WTC11 (cell line): ENCODE measurements at regions of chr12 and their contacts with region 1.

Region 1: GRCh38 chr12:68807576-68808387 is at the start of gene MDM2:
- DNase-seq: peak; percentile 94
- ATAC-seq: peak; percentile 83
- H3K4me3 Mint-ChIP-seq: peak within 1 kb of the TSS; percentile 86
- H3K27ac Mint-ChIP-seq: peak within 1 kb of the TSS; percentile 98
- H3K4me1 Mint-ChIP-seq: peaks cover 42% of the 10 kb centered on the region
- H3K27me3 Mint-ChIP-seq: no peaks in the 10 kb centered on the region
- CTCF ChIP-seq: peak; percentile 59
- total RNA-seq, gene MDM2: 130 to 207 TPM (median 137 TPM) in 3 replicates

Region 2: DNA sequence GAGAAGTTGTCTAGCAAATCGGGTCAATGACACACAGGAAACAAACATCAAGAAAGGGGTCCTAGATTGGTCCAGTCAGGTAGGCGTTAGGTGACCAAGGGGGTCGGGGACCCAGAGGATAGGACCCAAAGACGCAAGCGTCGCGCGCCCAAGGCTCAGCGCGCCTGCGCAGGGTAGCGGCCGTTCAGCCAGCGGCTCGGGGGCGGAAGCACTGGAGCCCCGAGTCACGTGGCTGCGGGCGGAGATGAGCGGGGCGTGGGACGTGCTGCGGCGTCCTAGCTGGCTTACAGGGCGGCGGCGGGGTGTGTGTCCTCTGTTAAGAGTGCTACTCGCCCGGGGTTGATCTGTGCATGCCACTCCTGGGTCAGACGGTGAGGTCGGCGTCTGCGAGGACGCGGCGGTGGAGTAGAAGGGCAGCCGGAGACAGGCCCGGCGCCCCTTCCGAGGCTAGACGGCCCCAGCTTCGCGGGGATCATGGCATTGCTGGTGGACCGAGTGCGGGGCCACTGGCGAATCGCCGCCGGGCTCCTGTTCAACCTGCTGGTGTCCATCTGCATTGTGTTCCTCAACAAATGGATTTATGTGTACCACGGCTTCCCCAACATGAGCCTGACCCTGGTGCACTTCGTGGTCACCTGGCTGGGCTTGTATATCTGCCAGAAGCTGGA is 61.7 kb before region 1 on chr12 and contains the start of gene SLC35E3:
- CTCF ChIA-PET with region 1: interaction called, 18 read pairs
- POLR2A ChIA-PET with region 1: interaction called, 13 read pairs
- DNase-seq: peak; percentile 86
- ATAC-seq: peak; percentile 97
- H3K4me3 Mint-ChIP-seq: peak within 1 kb of the TSS; percentile 98
- H3K27ac Mint-ChIP-seq: peak within 1 kb of the TSS; percentile 94
- H3K4me1 Mint-ChIP-seq: peaks cover 17% of the 10 kb centered on the region
- H3K27me3 Mint-ChIP-seq: no peaks in the 10 kb centered on the region
- CTCF ChIP-seq: no peak
- total RNA-seq, gene SLC35E3: 11.1 to 11.3 TPM (median 11.1 TPM) in 3 replicates

Region 3: GRCh38 chr12:68831272-68831671 is 23.5 kb after region 1 on chr12:
- CTCF ChIA-PET with region 1: interaction called, 23 read pairs
- POLR2A ChIA-PET with region 1: interaction called, 4 read pairs
- DNase-seq: no peak
- ATAC-seq: peak; percentile 76
- H3K4me3 Mint-ChIP-seq: no peak overlapping the region
- H3K27ac Mint-ChIP-seq: peak overlapping the region; percentile 85
- H3K4me1 Mint-ChIP-seq: peaks cover 24% of the 10 kb centered on the region
- H3K27me3 Mint-ChIP-seq: no peaks in the 10 kb centered on the region
- CTCF ChIP-seq: no peak

Region 4: GRCh38 chr12:68889647-68890121 is 81.9 kb after region 1 on chr12:
- CTCF ChIA-PET with region 1: no interaction called
- POLR2A ChIA-PET with region 1: no interaction called
- DNase-seq: no peak
- ATAC-seq: no peak
- H3K4me3 Mint-ChIP-seq: no peak overlapping the region
- H3K27ac Mint-ChIP-seq: no peak overlapping the region
- H3K4me1 Mint-ChIP-seq: no peaks in the 10 kb centered on the region
- H3K27me3 Mint-ChIP-seq: no peaks in the 10 kb centered on the region
- CTCF ChIP-seq: no peak